Mammary epithelial cell (primary cell): ENCODE measurements at regions of chr19 and their contacts with region 1.

Region 1: DNA sequence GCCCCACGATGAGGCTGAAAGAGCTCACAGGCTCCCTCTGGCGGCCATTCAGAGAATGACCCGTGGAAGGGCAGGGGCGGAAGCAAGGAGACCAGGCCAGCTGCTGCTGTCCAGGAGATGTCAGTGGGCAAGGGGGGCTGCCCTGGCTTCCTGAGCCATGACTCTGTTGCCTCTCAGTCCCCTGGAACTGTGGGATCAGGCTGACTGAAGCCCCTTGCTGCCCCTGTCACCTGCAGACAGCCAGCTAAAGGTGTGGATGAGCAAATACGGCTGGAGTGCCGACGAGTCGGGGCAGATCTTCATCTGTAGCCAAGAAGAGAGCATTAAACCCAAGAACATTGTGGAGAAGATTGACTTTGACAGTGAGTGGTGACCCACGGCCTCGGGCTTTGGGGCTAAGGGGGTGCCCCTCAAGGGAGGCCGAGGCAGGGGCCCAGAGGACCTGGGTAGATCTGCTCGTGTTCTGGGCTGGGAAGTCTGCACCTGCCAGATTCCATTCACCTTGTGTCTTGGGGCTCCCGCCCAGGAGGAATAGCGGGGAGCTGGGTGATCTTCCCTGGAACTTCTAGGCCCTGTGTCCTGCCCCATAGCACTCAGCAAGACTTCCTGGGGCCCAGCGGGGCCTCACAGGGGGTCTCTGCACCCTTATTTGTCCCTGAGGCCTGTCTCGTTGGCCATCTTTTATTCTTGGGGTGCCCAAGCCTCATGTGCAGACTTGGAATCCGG is 12.5 kb upstream of the ACTN4 start:
- DNase-seq: no peak
- H3K4me3 ChIP-seq: no peak overlapping the region
- H3K27ac ChIP-seq: no peak overlapping the region
- H3K4me1 ChIP-seq: peaks cover 35% of the 10 kb centered on the region
- H3K27me3 ChIP-seq: no peaks in the 10 kb centered on the region
- CTCF ChIP-seq: peak; percentile 89 to 93

Region 2: DNA sequence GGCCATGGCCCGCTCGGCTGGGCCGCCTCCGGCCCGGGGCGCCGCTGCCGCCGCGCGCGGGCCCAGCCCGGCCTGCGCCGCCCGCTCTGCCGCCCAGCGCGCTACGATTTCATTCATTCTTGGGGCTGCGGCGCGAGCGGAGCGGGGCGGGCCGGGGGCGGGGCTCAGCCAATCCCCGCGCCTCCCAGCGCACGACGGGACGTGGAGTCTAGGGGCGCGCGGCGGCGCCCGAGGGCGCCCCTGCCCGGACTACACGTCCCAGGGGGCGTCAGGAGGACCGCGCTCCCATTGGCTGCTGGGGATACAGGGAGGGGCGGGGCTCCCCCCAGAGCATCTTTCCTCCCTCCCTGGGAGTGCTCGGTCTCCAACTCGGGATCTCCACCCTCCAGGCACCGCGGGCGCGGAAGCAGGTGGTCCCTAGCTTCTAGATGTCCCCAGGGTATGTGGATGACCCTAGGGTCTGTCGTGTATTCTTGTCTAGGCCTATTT is 405.3 kb before region 1 on chr19:
- CTCF ChIA-PET with region 1: no interaction called
- dilution Hi-C with region 1: no loop called
- in situ Hi-C with region 1: no loop called
- intact Hi-C with region 1: loop called (anchors 5 kb)
- DNase-seq: peak; percentile 79
- H3K4me3 ChIP-seq: no peak overlapping the region
- H3K27ac ChIP-seq: no peak overlapping the region
- H3K4me1 ChIP-seq: peaks cover 14% of the 10 kb centered on the region
- H3K27me3 ChIP-seq: peaks cover 12% of the 10 kb centered on the region
- CTCF ChIP-seq: no peak

Region 3: GRCh38 chr19:38544034-38544958 is 90.6 kb before region 1 on chr19:
- CTCF ChIA-PET with region 1: interaction called, 9 read pairs
- dilution Hi-C with region 1: no loop called
- in situ Hi-C with region 1: no loop called
- intact Hi-C with region 1: loop called (anchors 1 kb)
- DNase-seq: peak; percentile 93
- H3K4me3 ChIP-seq: peak overlapping the region in 2 of 3 experiments; percentile 10 to 27
- H3K27ac ChIP-seq: peak overlapping the region; percentile 45
- H3K4me1 ChIP-seq: peaks cover 16% of the 10 kb centered on the region
- H3K27me3 ChIP-seq: no peaks in the 10 kb centered on the region
- CTCF ChIP-seq: peak; percentile 69 to 73

Region 4: GRCh38 chr19:38658462-38659306 is 23.8 kb after region 1 on chr19:
- CTCF ChIA-PET with region 1: no interaction called
- dilution Hi-C with region 1: no loop called
- in situ Hi-C with region 1: no loop called
- intact Hi-C with region 1: loop called (anchors 1 kb)
- DNase-seq: peak; percentile 99
- H3K4me3 ChIP-seq: peak overlapping the region in 1 of 3 experiments; percentile 44
- H3K27ac ChIP-seq: peak overlapping the region; percentile 100
- H3K4me1 ChIP-seq: peaks cover 93% of the 10 kb centered on the region
- H3K27me3 ChIP-seq: no peaks in the 10 kb centered on the region
- CTCF ChIP-seq: no peak

Region 5: DNA sequence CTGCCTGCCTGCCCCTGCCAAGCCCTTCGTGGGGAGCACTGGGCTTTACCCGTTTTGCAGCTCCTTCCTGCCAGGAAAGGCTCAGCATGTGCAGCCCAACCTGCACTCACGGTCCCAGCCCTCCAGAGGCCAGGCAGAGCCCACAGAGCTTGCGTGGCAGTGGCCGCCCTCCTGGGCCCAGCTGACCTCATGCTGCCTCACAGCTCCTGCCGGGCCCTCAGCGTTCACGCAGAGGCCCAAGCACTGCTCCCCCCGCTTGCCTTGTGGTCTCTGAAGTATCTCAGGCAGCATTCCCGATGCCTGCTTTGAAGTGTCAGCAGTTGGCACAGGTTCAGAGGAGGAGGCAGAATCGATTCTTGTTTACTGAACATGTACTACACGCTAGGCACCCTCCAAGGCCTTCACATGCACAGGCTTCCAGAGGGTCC is 76.8 kb after region 1 on chr19:
- CTCF ChIA-PET with region 1: no interaction called
- dilution Hi-C with region 1: no loop called
- in situ Hi-C with region 1: no loop called
- intact Hi-C with region 1: loop called (anchors 1 kb)
- DNase-seq: peak; percentile 83
- H3K4me3 ChIP-seq: no peak overlapping the region
- H3K27ac ChIP-seq: peak overlapping the region; percentile 7
- H3K4me1 ChIP-seq: peaks cover 52% of the 10 kb centered on the region
- H3K27me3 ChIP-seq: no peaks in the 10 kb centered on the region
- CTCF ChIP-seq: peak in 1 of 2 donors; percentile 9

Region 6: GRCh38 chr19:38838573-38839269 is 203.8 kb after region 1 on chr19:
- CTCF ChIA-PET with region 1: no interaction called
- dilution Hi-C with region 1: no loop called
- in situ Hi-C with region 1: loop called in 1 of 2 experiments (anchors 10 kb)
- intact Hi-C with region 1: loop called (anchors 1 kb)
- DNase-seq: peak; percentile 98
- H3K4me3 ChIP-seq: no peak overlapping the region
- H3K27ac ChIP-seq: peak overlapping the region; percentile 75
- H3K4me1 ChIP-seq: peaks cover 55% of the 10 kb centered on the region
- H3K27me3 ChIP-seq: no peaks in the 10 kb centered on the region
- CTCF ChIP-seq: peak; percentile 53 to 72

Region 7: GRCh38 chr19:38899447-38900219 is 264.7 kb after region 1 on chr19 and contains the starts of genes NFKBIB and SIRT2:
- CTCF ChIA-PET with region 1: no interaction called
- dilution Hi-C with region 1: no loop called
- in situ Hi-C with region 1: no loop called
- intact Hi-C with region 1: no loop called
- DNase-seq: peak; percentile 100
- H3K4me3 ChIP-seq: peak within 1 kb of the TSS; percentile 84 to 93 (median 93)
- H3K27ac ChIP-seq: peak within 1 kb of the TSS; percentile 96
- H3K4me1 ChIP-seq: peaks cover 13% of the 10 kb centered on the region
- H3K27me3 ChIP-seq: no peaks in the 10 kb centered on the region
- CTCF ChIP-seq: no peak
- total RNA-seq, gene NFKBIB: 9.5 to 27.2 TPM
- total RNA-seq, gene SIRT2: 43.3 to 65.3 TPM